Left ventricle myocardium inferior (tissue), 1 donor: ENCODE measurements at regions of chr11 and their contacts with region 1.

Region 1: GRCh38 chr11:63710476-63711217 is 29.3 kb downstream of the RTN3 start:
- DNase-seq: no peak
- H3K4me3 ChIP-seq: no peak overlapping the region
- H3K27ac ChIP-seq: no peak overlapping the region
- H3K4me1 ChIP-seq: peaks cover 18% of the 10 kb centered on the region
- H3K27me3 ChIP-seq: no peaks in the 10 kb centered on the region
- CTCF ChIP-seq: peak; percentile 34

Region 2: GRCh38 chr11:63667995-63668795 is 42.5 kb before region 1 on chr11:
- intact Hi-C with region 1: loop called (anchors 10 kb)
- DNase-seq: no peak
- H3K4me3 ChIP-seq: no peak overlapping the region
- H3K27ac ChIP-seq: peak overlapping the region; percentile 25
- H3K4me1 ChIP-seq: peaks cover 75% of the 10 kb centered on the region
- H3K27me3 ChIP-seq: no peaks in the 10 kb centered on the region
- CTCF ChIP-seq: no peak

Region 3: GRCh38 chr11:63768237-63769043 is 57.8 kb after region 1 on chr11 and contains the start of gene ZFTA:
- intact Hi-C with region 1: no loop called
- DNase-seq: peak; percentile 71
- H3K4me3 ChIP-seq: peak within 1 kb of the TSS; percentile 95
- H3K27ac ChIP-seq: peak within 1 kb of the TSS; percentile 91
- H3K4me1 ChIP-seq: peaks cover 59% of the 10 kb centered on the region
- H3K27me3 ChIP-seq: no peaks in the 10 kb centered on the region
- CTCF ChIP-seq: peak; percentile 89
- total RNA-seq, gene ZFTA: 11.5 TPM